Gastrocnemius medialis (tissue), 4 donors: ENCODE measurements at regions of chr6 and their contacts with region 1.

Region 1: GRCh38 chr6:137641474-137642077 is 147.4 kb upstream of the OLIG3 start:
- DNase-seq: peak; percentile 55 to 56
- ATAC-seq: peak; percentile 88 to 90
- H3K4me3 ChIP-seq: no peak overlapping the region
- H3K27ac ChIP-seq: no peak overlapping the region
- H3K4me1 ChIP-seq: peaks cover 0 to 3% of the 10 kb centered on the region in 2 donors
- H3K27me3 ChIP-seq: no peaks in the 10 kb centered on the region
- CTCF ChIP-seq: peak; percentile 48 to 70 (median 61)
- POLR2A ChIP-seq: no peak

Region 2: DNA sequence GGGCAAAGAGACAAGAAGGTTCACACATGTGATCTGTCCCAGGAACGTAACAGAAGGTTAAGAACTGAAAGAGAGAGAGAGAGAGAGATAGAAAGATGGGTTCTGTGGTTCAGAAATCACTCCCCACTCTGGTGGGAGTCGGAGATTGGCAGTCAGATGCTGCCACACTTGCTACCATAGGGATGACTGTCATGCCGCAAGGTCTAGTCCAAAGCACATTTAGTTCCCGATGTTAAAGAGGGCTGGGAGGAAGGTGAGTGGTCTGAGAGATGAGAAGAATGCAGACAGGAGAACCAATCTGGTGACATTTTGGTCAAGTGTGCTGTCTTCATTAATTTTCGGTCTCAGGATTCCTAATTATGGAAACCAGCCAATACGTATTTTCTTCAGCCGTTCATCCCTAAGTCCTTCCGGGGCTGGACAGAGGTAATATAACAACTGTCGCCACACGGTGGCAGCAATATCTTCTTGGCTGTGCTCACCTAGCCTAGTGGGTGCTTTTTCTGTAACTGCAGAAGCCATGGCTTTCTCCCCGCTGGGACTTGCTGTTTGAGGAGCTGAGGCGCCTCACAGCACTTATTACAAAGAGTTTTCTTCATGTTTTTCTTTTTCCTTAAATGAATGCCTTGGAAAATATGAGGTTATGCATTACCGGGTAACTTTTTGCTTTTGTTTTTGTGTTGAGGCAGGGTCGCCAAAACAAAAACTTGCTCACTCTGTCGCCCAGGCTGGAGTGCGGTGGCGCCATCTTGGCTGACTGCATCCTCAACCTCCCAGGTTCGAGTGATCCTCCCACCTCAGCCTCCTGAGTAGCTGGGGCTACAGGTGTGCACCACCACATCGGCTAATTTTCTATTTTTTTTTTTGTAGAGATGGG is 673.5 kb before region 1 on chr6:
- in situ Hi-C with region 1: loop called in 3 of 4 experiments (anchors 10 to 25 kb)
- intact Hi-C with region 1: loop called (anchors 2 kb)
- DNase-seq: peak in 1 of 2 donors; percentile 50
- ATAC-seq: peak; percentile 68 to 81
- H3K4me3 ChIP-seq: no peak overlapping the region
- H3K27ac ChIP-seq: no peak overlapping the region
- H3K4me1 ChIP-seq: no peaks in the 10 kb centered on the region
- H3K27me3 ChIP-seq: no peaks in the 10 kb centered on the region
- CTCF ChIP-seq: peak in 4 of 5 experiments; percentile 27 to 55 (median 46)
- POLR2A ChIP-seq: no peak

Region 3: DNA sequence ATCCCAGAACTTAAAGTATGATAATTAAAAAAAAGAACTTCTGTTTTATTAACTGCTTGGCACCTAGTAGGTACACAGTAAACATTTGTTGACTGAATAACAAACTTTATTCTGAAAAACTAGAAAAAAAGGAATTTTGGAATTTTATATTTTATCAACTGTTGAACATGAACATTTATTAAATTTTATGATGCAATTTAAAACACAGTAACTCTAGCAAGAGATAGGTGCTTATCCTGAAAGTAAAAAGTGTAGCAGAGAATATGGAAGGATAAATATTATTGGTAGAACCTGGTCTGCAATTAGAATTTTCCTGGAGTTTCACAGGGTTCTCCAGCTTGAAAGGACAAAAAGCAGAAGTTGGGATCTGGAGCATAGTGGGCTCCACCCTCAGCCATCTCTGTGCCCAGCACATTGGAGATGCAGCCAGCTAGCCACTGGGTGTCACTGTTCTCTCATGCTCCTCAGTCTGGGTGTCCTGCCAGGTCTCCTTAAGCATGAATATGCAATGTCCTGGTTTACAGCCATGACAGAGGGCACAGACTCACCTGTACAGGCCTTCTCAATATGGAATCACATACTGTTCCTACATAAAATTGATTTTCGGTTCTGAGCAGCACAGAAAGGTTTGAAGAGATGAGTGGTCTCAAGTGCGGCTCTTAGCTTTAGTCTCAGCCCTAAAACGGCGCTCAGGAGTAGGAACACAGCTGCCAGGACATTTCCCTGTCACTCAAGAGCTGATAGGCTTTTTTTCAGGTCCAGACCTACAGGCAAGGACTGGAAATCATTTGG is 565.1 kb before region 1 on chr6:
- in situ Hi-C with region 1: loop called in 3 of 4 experiments (anchors 10 to 25 kb)
- intact Hi-C with region 1: loop called (anchors 5 kb)
- DNase-seq: peak; percentile 28 to 60
- ATAC-seq: peak; percentile 68 to 85
- H3K4me3 ChIP-seq: no peak overlapping the region
- H3K27ac ChIP-seq: no peak overlapping the region
- H3K4me1 ChIP-seq: no peaks in the 10 kb centered on the region
- H3K27me3 ChIP-seq: no peaks in the 10 kb centered on the region
- CTCF ChIP-seq: peak; percentile 23 to 56 (median 49)
- POLR2A ChIP-seq: no peak

Region 4: GRCh38 chr6:137089305-137089704 is 552.3 kb before region 1 on chr6:
- in situ Hi-C with region 1: loop called in 3 of 4 experiments (anchors 5 to 25 kb)
- intact Hi-C with region 1: no loop called
- DNase-seq: no peak
- ATAC-seq: no peak
- H3K4me3 ChIP-seq: no peak overlapping the region
- H3K27ac ChIP-seq: no peak overlapping the region
- H3K4me1 ChIP-seq: no peaks in the 10 kb centered on the region
- H3K27me3 ChIP-seq: no peaks in the 10 kb centered on the region
- CTCF ChIP-seq: no peak
- POLR2A ChIP-seq: no peak

Region 5: DNA sequence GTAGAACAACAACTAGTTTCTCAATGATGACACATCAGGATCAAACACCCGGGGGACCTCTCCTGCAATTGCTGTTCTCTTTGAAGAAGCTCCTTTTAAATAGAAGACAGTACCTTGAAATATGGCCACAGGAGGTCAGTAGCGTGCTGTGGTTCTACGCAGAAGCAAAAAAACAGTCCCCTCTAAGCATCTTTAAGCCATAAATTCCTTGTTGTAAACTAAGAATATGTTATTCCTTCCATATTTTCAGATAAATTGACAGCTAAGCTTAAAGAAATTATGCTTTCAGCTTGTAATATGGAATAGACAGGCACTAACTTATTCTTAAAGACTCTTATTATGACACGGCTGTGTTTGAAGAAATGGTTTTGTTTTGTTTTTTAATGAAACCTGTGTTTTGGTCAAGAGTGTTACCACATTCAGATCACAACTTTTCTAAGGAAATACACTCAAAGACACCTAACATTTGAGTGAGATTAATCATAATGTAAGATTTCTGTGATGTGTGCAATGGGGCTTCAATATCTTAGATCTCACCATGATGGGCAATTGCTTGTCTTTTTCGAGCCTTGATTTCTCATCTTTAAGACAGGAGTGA is 547.1 kb before region 1 on chr6:
- in situ Hi-C with region 1: loop called in 3 of 4 experiments (anchors 5 to 25 kb)
- intact Hi-C with region 1: no loop called
- DNase-seq: peak; percentile 49 to 70
- ATAC-seq: peak; percentile 71 to 84
- H3K4me3 ChIP-seq: no peak overlapping the region
- H3K27ac ChIP-seq: no peak overlapping the region
- H3K4me1 ChIP-seq: no peaks in the 10 kb centered on the region
- H3K27me3 ChIP-seq: no peaks in the 10 kb centered on the region
- CTCF ChIP-seq: peak; percentile 56 to 75 (median 71)
- POLR2A ChIP-seq: no peak

Region 6: GRCh38 chr6:137271245-137272183 is 370.1 kb before region 1 on chr6:
- in situ Hi-C with region 1: loop called (anchors 5 to 25 kb)
- intact Hi-C with region 1: loop called (anchors 1 kb)
- DNase-seq: no peak
- ATAC-seq: peak; percentile 56 to 81
- H3K4me3 ChIP-seq: no peak overlapping the region
- H3K27ac ChIP-seq: no peak overlapping the region
- H3K4me1 ChIP-seq: no peaks in the 10 kb centered on the region
- H3K27me3 ChIP-seq: no peaks in the 10 kb centered on the region
- CTCF ChIP-seq: peak; percentile 57 to 86 (median 79)
- POLR2A ChIP-seq: no peak

Region 7: GRCh38 chr6:137291441-137291840 is 350.1 kb before region 1 on chr6:
- in situ Hi-C with region 1: loop called in 1 of 4 experiments (anchors 25 kb)
- intact Hi-C with region 1: no loop called
- DNase-seq: peak; percentile 19 to 45
- ATAC-seq: no peak
- H3K4me3 ChIP-seq: no peak overlapping the region
- H3K27ac ChIP-seq: no peak overlapping the region
- H3K4me1 ChIP-seq: no peaks in the 10 kb centered on the region
- H3K27me3 ChIP-seq: no peaks in the 10 kb centered on the region
- CTCF ChIP-seq: no peak
- POLR2A ChIP-seq: no peak

Region 8: DNA sequence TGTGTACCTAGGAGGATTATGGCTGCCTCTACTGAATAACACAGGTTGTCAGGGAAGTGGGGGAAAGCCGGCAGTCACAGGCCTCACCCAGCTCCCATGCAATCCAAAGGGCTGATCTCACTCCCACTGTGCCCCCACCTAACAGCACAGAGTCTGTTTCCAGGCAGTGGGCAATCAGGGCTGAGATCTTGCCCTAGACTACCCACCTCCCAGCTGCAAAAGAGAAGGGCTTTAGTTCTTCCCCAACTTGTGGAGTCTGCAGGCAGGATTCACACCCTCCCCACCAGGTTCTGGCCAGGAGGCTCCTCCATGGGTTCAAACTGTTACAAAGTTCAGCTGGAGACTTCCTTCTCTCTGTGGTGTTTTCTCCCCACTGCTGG is 81.4 kb before region 1 on chr6:
- in situ Hi-C with region 1: no loop called
- intact Hi-C with region 1: no loop called
- DNase-seq: no peak
- ATAC-seq: no peak
- H3K4me3 ChIP-seq: no peak overlapping the region
- H3K27ac ChIP-seq: no peak overlapping the region
- H3K4me1 ChIP-seq: no peaks in the 10 kb centered on the region
- H3K27me3 ChIP-seq: no peaks in the 10 kb centered on the region
- CTCF ChIP-seq: no peak
- POLR2A ChIP-seq: no peak

Region 9: GRCh38 chr6:137697267-137697938 is 55.8 kb after region 1 on chr6:
- in situ Hi-C with region 1: no loop called
- intact Hi-C with region 1: no loop called
- DNase-seq: no peak
- ATAC-seq: no peak
- H3K4me3 ChIP-seq: no peak overlapping the region
- H3K27ac ChIP-seq: no peak overlapping the region
- H3K4me1 ChIP-seq: peaks cover 8 to 13% of the 10 kb centered on the region in 2 donors
- H3K27me3 ChIP-seq: no peaks in the 10 kb centered on the region
- CTCF ChIP-seq: no peak
- POLR2A ChIP-seq: no peak